ENCODE measurements at regions of chr1 and their contacts with region 1.

Region 1: GRCh38 chr1:186985889-186986491 is 157.2 kb downstream of the PLA2G4A start:
- DNase-seq: no peak
- H3K4me3 ChIP-seq: no peak overlapping the region
- H3K27ac ChIP-seq: peak overlapping the region in 3 of 4 donors; percentile 77 to 82 (median 81)
- H3K4me1 ChIP-seq: peaks cover 0 to 56% (median 43%) of the 10 kb centered on the region in 4 donors
- H3K27me3 ChIP-seq: no peaks in the 10 kb centered on the region
- CTCF ChIP-seq: peak; percentile 57 to 75 (median 68)
- EP300 ChIP-seq: no peak
- POLR2A ChIP-seq: no peak

Region 2: DNA sequence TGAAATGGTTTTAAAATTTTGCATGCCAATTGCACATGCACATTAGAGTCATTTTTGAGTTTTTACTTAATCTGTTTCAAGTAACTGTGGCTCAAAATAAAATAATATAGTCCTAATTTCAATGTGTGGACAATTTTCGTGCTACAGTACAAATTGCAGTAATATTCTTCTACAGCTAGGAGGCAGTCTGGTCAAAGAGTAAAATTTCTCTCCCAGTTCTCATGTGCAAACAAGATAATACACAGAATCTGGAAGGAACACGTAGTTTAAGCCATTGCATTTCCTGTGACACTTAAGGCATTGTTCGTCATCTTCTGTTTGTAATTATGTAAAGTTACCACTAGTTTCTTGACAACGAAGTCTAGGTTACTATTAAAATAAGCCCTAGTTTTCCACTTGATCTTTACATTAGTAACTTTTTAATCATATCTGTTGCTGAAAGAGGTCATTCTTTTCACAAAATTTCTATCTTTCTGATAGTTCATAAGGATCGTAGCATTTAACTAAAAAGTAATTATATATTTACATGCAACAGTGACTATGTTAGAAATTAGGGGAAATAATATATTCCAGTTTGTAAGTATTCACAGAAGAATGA is 581.4 kb before region 1 on chr1:
- intact Hi-C with region 1: loop called (anchors 2 kb)
- DNase-seq: no peak
- H3K4me3 ChIP-seq: no peak overlapping the region
- H3K27ac ChIP-seq: no peak overlapping the region
- H3K4me1 ChIP-seq: no peaks in the 10 kb centered on the region
- H3K27me3 ChIP-seq: no peaks in the 10 kb centered on the region
- CTCF ChIP-seq: peak in 3 of 4 experiments; percentile 45 to 54 (median 50)
- EP300 ChIP-seq: no peak
- POLR2A ChIP-seq: no peak

Region 3: DNA sequence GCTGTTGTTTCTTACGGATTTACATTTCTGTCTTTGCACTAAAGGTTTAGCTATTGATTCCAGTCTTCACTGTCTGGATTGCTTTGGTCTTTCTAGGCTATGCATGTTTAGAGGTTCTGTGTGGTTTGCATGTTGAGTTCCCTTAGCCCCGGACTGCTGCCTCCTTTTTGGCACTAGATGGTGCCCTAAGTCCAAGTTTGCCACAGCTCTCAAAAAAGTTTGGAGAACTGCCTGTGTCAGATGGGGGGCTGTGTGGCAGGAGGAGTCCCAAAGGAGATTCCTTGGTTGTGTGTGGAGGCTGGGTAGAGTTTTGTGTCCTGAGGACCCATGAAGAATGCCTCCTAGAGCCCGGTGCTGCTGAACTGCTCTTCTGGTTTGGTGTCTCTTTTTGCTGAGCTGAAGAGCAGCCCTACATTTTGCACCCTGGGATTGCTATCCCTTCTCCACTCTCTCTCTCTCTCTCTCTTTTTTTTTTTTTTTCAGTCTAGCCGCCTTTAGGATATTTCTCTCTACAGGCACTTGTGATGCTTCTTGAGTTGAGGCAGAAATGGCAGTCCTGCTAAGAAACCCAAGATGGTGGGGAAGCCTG is 380.1 kb before region 1 on chr1:
- intact Hi-C with region 1: loop called (anchors 1 kb)
- DNase-seq: peak; percentile 69
- H3K4me3 ChIP-seq: no peak overlapping the region
- H3K27ac ChIP-seq: no peak overlapping the region
- H3K4me1 ChIP-seq: peaks cover 0 to 18% (median 10%) of the 10 kb centered on the region in 4 donors
- H3K27me3 ChIP-seq: no peaks in the 10 kb centered on the region
- CTCF ChIP-seq: peak; percentile 42 to 72 (median 54)
- EP300 ChIP-seq: no peak
- POLR2A ChIP-seq: no peak

Region 4: DNA sequence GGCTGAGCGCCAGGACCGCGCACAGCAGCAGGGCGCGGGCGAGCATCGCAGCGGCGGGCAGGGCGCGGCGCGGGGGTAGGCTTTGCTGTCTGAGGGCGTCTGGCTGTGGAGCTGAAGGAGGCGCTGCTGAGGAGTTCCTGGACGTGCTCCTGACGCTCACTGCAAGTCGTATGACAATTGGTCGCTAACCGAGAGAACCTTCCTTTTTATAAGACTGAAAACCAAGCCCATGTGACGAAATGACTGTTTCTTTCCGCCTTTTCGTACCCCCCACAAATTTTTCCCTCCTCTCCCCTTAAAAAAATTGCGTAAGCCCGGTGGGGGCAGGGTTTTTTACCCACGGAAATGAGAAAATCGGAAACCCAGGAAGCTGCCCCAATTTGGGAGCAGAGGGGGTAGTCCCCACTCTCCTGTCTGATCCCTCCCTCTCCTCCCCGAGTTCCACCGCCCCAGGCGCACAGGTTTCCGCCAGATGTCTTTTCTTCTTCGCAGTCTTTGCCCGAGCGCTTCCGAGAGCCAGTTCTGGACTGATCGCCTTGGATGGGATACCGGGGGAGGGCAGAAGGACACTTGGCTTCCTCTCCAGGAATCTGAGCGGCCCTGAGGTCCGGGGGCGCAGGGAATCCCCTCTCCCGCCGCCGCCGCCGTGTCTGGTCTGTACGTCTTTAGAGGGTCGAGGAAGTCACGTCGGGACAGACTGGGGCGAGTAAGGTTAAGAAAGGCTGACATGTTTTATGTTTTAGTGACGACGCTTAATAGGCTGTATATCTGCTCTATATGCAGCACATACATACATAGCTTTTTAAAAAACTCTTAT is 305.5 kb before region 1 on chr1 and contains the start of gene PTGS2:
- intact Hi-C with region 1: loop called (anchors 2 kb)
- DNase-seq: peak; percentile 95
- H3K4me3 ChIP-seq: peak within 1 kb of the TSS; percentile 72 to 78 (median 74)
- H3K27ac ChIP-seq: peak within 1 kb of the TSS; percentile 89 to 96 (median 94)
- H3K4me1 ChIP-seq: peaks cover 0 to 55% (median 19%) of the 10 kb centered on the region in 4 donors
- H3K27me3 ChIP-seq: no peaks in the 10 kb centered on the region
- CTCF ChIP-seq: peak in 3 of 4 experiments; percentile 9 to 39 (median 35)
- EP300 ChIP-seq: peak in 2 of 4 donors; percentile 62 to 72
- POLR2A ChIP-seq: peak; percentile 83 to 87
- total RNA-seq, gene PTGS2: 16.1 to 118 (median 31.1) TPM

Region 5: DNA sequence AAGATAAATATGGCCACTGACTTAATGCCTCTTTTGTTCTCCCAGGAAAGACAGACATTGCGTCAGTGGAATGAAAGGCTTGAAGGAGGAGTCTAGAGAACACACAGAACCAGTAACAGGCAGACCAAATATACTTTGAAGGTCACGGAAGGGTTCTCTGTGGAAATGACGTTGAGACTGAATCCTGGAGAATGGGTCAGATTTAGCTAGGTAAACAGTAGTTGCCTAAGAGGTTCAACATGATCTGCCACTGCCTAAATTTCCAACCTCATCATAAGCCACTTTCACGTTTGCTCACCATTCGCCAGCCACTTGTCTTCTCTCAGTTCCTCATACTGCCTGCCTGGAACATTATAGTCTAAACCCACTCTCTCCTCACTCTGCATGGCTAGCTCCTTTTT is 136.7 kb before region 1 on chr1:
- intact Hi-C with region 1: no loop called
- DNase-seq: no peak
- H3K4me3 ChIP-seq: no peak overlapping the region
- H3K27ac ChIP-seq: peak overlapping the region in 2 of 4 donors; percentile 8 to 47
- H3K4me1 ChIP-seq: peaks cover 0 to 31% (median 17%) of the 10 kb centered on the region in 4 donors
- H3K27me3 ChIP-seq: no peaks in the 10 kb centered on the region
- CTCF ChIP-seq: no peak
- EP300 ChIP-seq: no peak
- POLR2A ChIP-seq: no peak

Region 6: GRCh38 chr1:186915555-186915954 is 70.4 kb before region 1 on chr1:
- intact Hi-C with region 1: loop called (anchors 5 kb)
- DNase-seq: no peak
- H3K4me3 ChIP-seq: no peak overlapping the region
- H3K27ac ChIP-seq: no peak overlapping the region
- H3K4me1 ChIP-seq: no peaks in the 10 kb centered on the region
- H3K27me3 ChIP-seq: no peaks in the 10 kb centered on the region
- CTCF ChIP-seq: no peak
- EP300 ChIP-seq: no peak
- POLR2A ChIP-seq: no peak